ENCODE measurements at regions of chr1 and their contacts with region 1.

Region 1: GRCh38 chr1:64898107-64898845 is 68.1 kb downstream of the JAK1 start:
- DNase-seq: peak; percentile 65 to 89
- ATAC-seq: peak; percentile 92 to 99 (median 96)
- H3K4me3 ChIP-seq: no peak overlapping the region
- H3K27ac ChIP-seq: peak overlapping the region; percentile 24 to 90 (median 78)
- H3K4me1 ChIP-seq: peaks cover 11 to 88% (median 62%) of the 10 kb centered on the region in 9 donors
- H3K27me3 ChIP-seq: no peaks in the 10 kb centered on the region
- CTCF ChIP-seq: no peak

Region 2: GRCh38 chr1:64950284-64950809 is 52.1 kb after region 1 on chr1:
- intact Hi-C with region 1: loop called in 2 of 10 experiments (anchors 5 to 10 kb)
- DNase-seq: no peak
- ATAC-seq: no peak
- H3K4me3 ChIP-seq: no peak overlapping the region
- H3K27ac ChIP-seq: no peak overlapping the region
- H3K4me1 ChIP-seq: peaks cover 2 to 90% (median 57%) of the 10 kb centered on the region in 9 donors
- H3K27me3 ChIP-seq: no peaks in the 10 kb centered on the region
- CTCF ChIP-seq: no peak

Measured in heart right ventricle (tissue), 16 donors.